ENCODE measurements at regions of chr9 and their contacts with region 1.

Region 1: GRCh38 chr9:71703172-71703872 is 65.0 kb downstream of the CEMIP2 start:
- DNase-seq: no peak
- H3K4me3 ChIP-seq: no peak overlapping the region
- H3K27ac ChIP-seq: no peak overlapping the region
- H3K4me1 ChIP-seq: no peaks in the 10 kb centered on the region
- H3K27me3 ChIP-seq: no peaks in the 10 kb centered on the region
- CTCF ChIP-seq: no peak
- POLR2A ChIP-seq: no peak

Region 2: DNA sequence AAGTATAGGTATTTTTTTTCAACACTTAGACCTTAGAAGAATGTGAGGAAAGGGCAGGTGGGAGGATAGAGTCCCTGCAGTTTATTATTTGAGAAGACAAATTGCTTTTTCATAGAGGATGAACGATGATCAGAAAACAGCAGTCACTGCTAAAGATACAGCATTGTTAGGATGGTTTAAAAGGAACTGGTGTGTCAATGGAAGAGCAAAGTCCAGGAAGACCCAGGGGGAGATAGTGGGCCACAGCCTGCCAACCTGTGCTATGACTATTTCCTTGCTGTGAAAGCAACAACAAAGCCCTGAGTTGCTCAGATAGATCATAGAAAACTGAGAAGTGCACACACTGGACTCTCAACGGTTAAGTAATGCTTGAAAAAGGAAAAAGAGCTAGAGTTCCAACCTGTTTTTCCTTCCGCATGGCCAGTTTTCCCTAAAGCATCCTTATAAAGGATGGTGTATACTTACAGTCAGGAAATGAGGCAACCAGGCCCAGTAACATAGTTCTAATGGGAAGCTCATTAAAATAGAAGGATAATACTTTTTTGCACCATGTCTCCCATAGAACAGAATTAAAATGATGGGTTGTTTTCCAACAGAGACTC is 88.8 kb before region 1 on chr9:
- intact Hi-C with region 1: loop called in 1 of 2 experiments (anchors 10 kb)
- DNase-seq: no peak
- H3K4me3 ChIP-seq: no peak overlapping the region
- H3K27ac ChIP-seq: no peak overlapping the region
- H3K4me1 ChIP-seq: no peaks in the 10 kb centered on the region
- H3K27me3 ChIP-seq: no peaks in the 10 kb centered on the region
- CTCF ChIP-seq: no peak
- POLR2A ChIP-seq: no peak

Region 3: DNA sequence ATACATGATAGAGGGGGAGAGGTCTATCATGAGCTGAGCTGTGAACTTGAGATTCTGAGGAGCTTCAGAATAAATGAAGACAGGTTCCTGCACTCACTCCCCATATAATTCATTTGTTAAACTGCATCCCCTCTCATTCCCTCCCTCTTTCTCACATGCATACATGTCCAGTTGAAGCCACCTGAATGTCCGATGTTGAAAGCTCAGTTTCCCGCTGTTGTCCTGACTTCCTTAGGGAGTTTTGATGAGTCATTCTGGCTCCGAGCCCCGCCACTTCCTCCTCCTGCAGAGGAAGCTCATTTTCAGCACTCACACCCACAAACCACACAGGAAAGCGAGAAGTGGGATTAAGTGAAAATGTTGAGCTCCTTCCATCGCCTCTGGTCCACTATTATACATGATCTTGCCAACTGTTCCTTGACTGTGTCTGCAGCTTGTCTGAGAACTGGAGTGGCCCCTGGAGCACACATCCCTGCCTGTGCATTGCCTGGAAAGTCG is 56.2 kb before region 1 on chr9:
- intact Hi-C with region 1: loop called in 1 of 2 experiments (anchors 10 kb)
- DNase-seq: peak; percentile 58 to 85 (median 73)
- H3K4me3 ChIP-seq: peak overlapping the region in 1 of 4 donors; percentile 3
- H3K27ac ChIP-seq: peak overlapping the region in 2 of 5 donors; percentile 35 to 42
- H3K4me1 ChIP-seq: peaks cover 0 to 16% of the 10 kb centered on the region in 2 donors
- H3K27me3 ChIP-seq: no peaks in the 10 kb centered on the region
- CTCF ChIP-seq: no peak
- POLR2A ChIP-seq: no peak

Region 4: DNA sequence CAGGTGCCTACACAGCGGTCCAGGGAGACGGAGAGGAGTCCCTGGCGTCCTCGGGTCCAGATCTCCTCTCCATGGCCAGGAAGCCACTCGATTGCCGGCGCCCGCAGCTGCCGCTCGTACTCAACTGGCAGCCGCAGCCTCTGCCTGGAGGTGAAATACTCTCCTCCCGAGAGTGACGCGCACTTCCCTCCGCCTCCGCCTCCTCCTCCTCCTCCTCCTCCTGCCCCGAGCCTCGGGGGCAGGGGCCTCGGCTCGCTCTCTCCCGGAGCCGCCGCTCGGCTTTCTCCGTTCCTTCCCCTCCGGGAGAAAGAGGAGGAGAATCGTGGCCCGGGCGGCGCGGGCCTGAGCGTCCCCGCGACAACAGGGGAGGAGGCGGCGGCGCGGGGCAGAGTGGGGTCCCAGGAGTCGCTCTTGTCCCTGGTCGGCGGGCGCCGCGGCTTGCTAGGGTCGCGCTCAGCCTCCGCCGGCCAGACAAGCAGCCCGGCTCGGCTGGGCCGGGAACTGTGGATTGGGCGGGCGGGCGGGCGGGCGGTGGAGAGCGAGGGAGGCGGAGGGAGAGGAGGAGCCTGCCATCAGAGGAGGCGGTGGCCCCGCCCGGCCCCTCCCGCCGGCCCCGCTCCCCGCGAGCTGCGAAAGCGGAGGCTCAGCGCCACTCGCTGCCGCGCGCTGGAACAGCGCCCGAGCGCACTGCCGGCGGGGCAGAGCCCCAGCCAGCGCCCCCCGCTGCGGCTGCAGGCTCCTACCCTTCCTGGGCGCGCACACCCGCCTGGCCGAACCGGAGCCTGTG is 65.3 kb after region 1 on chr9 and contains the start of gene CEMIP2:
- intact Hi-C with region 1: loop called in 1 of 2 experiments (anchors 10 kb)
- DNase-seq: peak; percentile 92 to 95 (median 93)
- H3K4me3 ChIP-seq: peak within 1 kb of the TSS; percentile 36 to 88 (median 64)
- H3K27ac ChIP-seq: peak within 1 kb of the TSS; percentile 94 to 97 (median 96)
- H3K4me1 ChIP-seq: peaks cover 5 to 40% of the 10 kb centered on the region in 2 donors
- H3K27me3 ChIP-seq: no peaks in the 10 kb centered on the region
- CTCF ChIP-seq: peak in 3 of 6 experiments; percentile 19 to 54 (median 44)
- POLR2A ChIP-seq: peak; percentile 87 to 97
- total RNA-seq, gene CEMIP2: 9.3 to 84.6 (median 34.6) TPM

Region 5: GRCh38 chr9:72154468-72155281 is 451.4 kb after region 1 on chr9:
- intact Hi-C with region 1: no loop called
- DNase-seq: no peak
- H3K4me3 ChIP-seq: no peak overlapping the region
- H3K27ac ChIP-seq: no peak overlapping the region
- H3K4me1 ChIP-seq: no peaks in the 10 kb centered on the region
- H3K27me3 ChIP-seq: peaks cover 3% of the 10 kb centered on the region
- CTCF ChIP-seq: no peak
- POLR2A ChIP-seq: no peak

Measured in adrenal gland (tissue), 19 donors.